Activated CD4-positive, alpha-beta T cell treated with anti-CD3 and anti-CD28 coated beads, Interleukin-2, amount 10 ng/mL, durations not matched to agents 7 days and 5 days (primary cell): ENCODE measurements at regions of chr14 and their contacts with region 1.

Region 1: GRCh38 chr14:74917646-74918081 is 5.4 kb downstream of the RPS6KL1 start:
- DNase-seq: no peak
- H3K4me3 Mint-ChIP-seq: no peak overlapping the region
- H3K27ac Mint-ChIP-seq: no peak overlapping the region
- H3K4me1 Mint-ChIP-seq: peaks cover 5% of the 10 kb centered on the region
- H3K27me3 Mint-ChIP-seq: no peaks in the 10 kb centered on the region

Region 2: GRCh38 chr14:74891870-74892269 is 25.8 kb before region 1 on chr14:
- CTCF ChIA-PET with region 1: no interaction called
- POLR2A ChIA-PET with region 1: no interaction called
- DNase-seq: no peak
- H3K4me3 Mint-ChIP-seq: no peak overlapping the region
- H3K27ac Mint-ChIP-seq: no peak overlapping the region
- H3K4me1 Mint-ChIP-seq: peaks cover 21% of the 10 kb centered on the region
- H3K27me3 Mint-ChIP-seq: no peaks in the 10 kb centered on the region

Region 3: DNA sequence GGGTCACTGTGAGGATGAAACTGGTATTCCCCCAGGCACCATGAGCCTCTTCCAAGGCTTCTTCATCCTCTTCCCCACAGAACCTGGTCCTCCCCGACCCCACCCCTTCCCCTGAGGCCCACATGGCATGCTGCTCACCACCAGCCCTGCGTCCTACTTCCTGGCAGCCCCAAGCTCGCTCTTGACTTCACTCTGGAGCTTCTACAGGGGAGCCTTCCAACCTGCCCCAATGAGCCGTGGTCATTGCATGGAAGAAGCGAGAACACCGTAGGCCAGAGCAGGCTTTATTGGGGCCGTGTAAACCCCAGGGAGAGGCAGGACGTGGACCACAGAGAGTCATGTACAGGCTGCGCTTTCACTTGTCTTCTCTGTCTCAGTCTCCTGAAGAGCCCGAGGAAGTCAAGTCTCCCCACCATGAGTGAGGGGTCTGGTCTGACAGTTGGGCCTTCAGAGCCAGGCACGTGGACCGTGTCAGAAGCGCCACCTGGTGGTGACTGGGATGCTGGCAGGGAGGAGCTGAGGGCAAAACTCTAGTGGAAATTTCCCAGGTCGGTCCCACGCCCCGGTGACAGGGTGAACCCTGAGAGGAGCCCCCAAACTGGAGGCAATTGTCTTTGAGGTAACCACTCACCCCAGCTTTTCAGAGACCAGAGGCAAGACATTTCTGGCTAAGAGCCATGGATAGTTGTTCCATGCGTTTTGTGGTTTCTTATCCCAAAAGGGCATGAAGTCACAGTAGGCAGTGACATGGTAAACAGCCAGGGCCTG is 12.1 kb before region 1 on chr14:
- CTCF ChIA-PET with region 1: interaction called, 11 read pairs
- POLR2A ChIA-PET with region 1: no interaction called
- DNase-seq: peak; percentile 81
- H3K4me3 Mint-ChIP-seq: no peak overlapping the region
- H3K27ac Mint-ChIP-seq: peak overlapping the region; percentile 60
- H3K4me1 Mint-ChIP-seq: peaks cover 9% of the 10 kb centered on the region
- H3K27me3 Mint-ChIP-seq: no peaks in the 10 kb centered on the region